Activated CD4-positive, alpha-beta memory T cell treated with anti-CD3 and anti-CD28 coated beads for 36 hours (primary cell): ENCODE measurements at regions of chr2 and their contacts with region 1.

Region 1: GRCh38 chr2:135948642-135949355 is 36.6 kb downstream of the DARS1 start:
- DNase-seq: peak; percentile 55
- H3K4me3 Mint-ChIP-seq: peak overlapping the region; percentile 53
- H3K27ac Mint-ChIP-seq: peak overlapping the region; percentile 87
- H3K4me1 Mint-ChIP-seq: peaks cover 64% of the 10 kb centered on the region
- H3K27me3 Mint-ChIP-seq: no peaks in the 10 kb centered on the region

Region 2: GRCh38 chr2:135960656-135961551 is 12.1 kb after region 1 on chr2:
- CTCF ChIA-PET with region 1: no interaction called
- POLR2A ChIA-PET with region 1: interaction called, 5 read pairs
- intact Hi-C with region 1: loop called (anchors 1 kb)
- DNase-seq: peak; percentile 37
- H3K4me3 Mint-ChIP-seq: peak overlapping the region; percentile 1
- H3K27ac Mint-ChIP-seq: peak overlapping the region; percentile 75
- H3K4me1 Mint-ChIP-seq: peaks cover 59% of the 10 kb centered on the region
- H3K27me3 Mint-ChIP-seq: no peaks in the 10 kb centered on the region

Region 3: GRCh38 chr2:136052369-136053362 is 103.9 kb after region 1 on chr2:
- CTCF ChIA-PET with region 1: no interaction called
- POLR2A ChIA-PET with region 1: interaction called, 14 read pairs
- intact Hi-C with region 1: loop called (anchors 1 kb)
- DNase-seq: peak; percentile 35
- H3K4me3 Mint-ChIP-seq: peak overlapping the region; percentile 57
- H3K27ac Mint-ChIP-seq: peak overlapping the region; percentile 99
- H3K4me1 Mint-ChIP-seq: peaks cover 86% of the 10 kb centered on the region
- H3K27me3 Mint-ChIP-seq: no peaks in the 10 kb centered on the region

Region 4: GRCh38 chr2:136168720-136169119 is 219.9 kb after region 1 on chr2:
- CTCF ChIA-PET with region 1: no interaction called
- POLR2A ChIA-PET with region 1: no interaction called
- intact Hi-C with region 1: no loop called
- DNase-seq: no peak
- H3K4me3 Mint-ChIP-seq: no peak overlapping the region
- H3K27ac Mint-ChIP-seq: no peak overlapping the region
- H3K4me1 Mint-ChIP-seq: peaks cover 6% of the 10 kb centered on the region
- H3K27me3 Mint-ChIP-seq: no peaks in the 10 kb centered on the region